HEK293 (cell line): ENCODE measurements at regions of chrX and their contacts with region 1.

Region 1: GRCh38 chrX:119067023-119067739 is 5.6 kb upstream of the CT47C1 start:
- H3K4me3 ChIP-seq: no peak overlapping the region
- H3K27ac ChIP-seq: no peak overlapping the region
- H3K4me1 ChIP-seq: no peaks in the 10 kb centered on the region
- CTCF ChIP-seq: peak; percentile 43; the same call in 1 of the 2 replicates

Region 2: DNA sequence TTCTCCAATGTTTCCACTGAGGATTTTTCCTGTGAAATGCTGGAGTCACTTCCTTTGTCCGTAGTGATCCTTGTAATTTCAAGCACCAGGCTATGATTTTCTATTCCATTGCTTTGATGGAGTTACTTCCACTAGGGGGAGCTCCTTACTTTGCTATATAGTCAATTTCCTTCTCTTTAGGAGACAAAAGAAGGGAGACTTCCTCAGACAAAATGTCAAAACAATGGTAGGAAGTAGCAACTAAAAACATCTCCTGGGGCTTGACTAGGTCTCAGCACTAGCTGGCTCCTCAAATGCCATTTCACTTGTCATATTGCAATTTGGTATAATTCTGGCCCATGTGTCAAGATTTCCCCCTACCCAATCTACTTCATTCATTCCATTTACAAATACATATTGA is 219.5 kb before region 1 on chrX:
- CTCF ChIA-PET with region 1: interaction called, 33 read pairs
- POLR2A ChIA-PET with region 1: no interaction called
- H3K4me3 ChIP-seq: no peak overlapping the region
- H3K27ac ChIP-seq: no peak overlapping the region
- H3K4me1 ChIP-seq: no peaks in the 10 kb centered on the region
- CTCF ChIP-seq: peak; percentile 64; the same call in 1 of the 2 replicates